PC-3 (cell line): ENCODE measurements at regions of chr11 and their contacts with region 1.

Region 1: GRCh38 chr11:695538-696248 is at the start of gene TMEM80:
- DNase-seq: peak; percentile 98
- ATAC-seq: peak; percentile 78
- H3K4me3 ChIP-seq: peak within 1 kb of the TSS; percentile 86
- H3K27ac ChIP-seq: peak within 1 kb of the TSS; percentile 88
- H3K4me1 ChIP-seq: peaks cover 35% of the 10 kb centered on the region
- H3K27me3 ChIP-seq: no peaks in the 10 kb centered on the region
- CTCF ChIP-seq: no peak
- total RNA-seq, gene TMEM80: 10.8 and 16.2 TPM in 2 replicates

Region 2: DNA sequence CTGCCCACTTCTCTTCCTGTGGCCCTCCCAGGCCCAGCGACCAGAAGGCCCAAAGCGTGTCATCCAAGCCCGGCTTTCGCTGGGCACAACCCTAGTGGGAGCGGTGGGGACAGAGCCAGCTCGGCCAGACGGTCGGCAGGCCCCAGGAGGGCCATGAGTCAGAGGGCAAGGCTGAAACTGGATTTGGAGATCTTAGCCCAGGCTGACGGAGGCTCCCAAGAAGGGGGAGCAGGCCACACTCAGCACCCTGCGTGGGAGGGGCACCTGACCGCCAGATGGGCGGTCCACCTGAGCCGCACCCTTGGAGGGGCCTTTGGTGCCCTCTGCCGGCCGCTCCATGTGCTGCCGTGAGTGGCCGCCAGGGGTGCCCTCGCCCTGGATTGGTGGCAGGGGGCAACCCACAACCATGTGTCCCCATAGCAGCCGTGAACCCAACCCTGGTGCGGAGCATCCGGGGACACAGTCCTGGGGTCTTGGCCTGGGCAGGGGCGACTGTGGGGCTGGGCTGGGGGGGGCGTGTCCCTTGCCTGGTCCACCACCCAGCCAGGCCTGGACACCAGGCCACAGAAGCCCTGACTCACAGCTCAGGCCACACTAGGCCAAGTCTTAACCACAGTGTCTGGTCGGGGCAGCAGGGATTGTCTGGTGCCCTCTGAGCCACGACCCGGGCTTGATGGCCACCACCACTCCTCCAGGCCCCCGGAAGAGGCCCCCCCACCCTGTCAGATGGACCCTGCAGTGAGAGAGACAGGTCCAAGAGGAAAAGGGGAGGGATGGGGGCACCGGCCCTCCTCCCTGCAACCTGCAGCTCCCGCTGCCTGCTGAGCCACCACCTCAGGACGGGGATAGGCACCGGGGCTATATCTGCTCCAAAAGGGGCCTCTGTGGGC is 32.4 kb after region 1 on chr11:
- CTCF ChIA-PET with region 1: interaction called, 11 read pairs
- POLR2A ChIA-PET with region 1: no interaction called
- intact Hi-C with region 1: loop called (anchors 1 kb)
- DNase-seq: peak; percentile 96
- ATAC-seq: peak; percentile 83
- H3K4me3 ChIP-seq: no peak overlapping the region; the same call in 1 of the 2 replicates
- H3K27ac ChIP-seq: peak overlapping the region; percentile 83
- H3K4me1 ChIP-seq: peaks cover 17% of the 10 kb centered on the region
- H3K27me3 ChIP-seq: no peaks in the 10 kb centered on the region
- CTCF ChIP-seq: peak; percentile 98

Region 3: DNA sequence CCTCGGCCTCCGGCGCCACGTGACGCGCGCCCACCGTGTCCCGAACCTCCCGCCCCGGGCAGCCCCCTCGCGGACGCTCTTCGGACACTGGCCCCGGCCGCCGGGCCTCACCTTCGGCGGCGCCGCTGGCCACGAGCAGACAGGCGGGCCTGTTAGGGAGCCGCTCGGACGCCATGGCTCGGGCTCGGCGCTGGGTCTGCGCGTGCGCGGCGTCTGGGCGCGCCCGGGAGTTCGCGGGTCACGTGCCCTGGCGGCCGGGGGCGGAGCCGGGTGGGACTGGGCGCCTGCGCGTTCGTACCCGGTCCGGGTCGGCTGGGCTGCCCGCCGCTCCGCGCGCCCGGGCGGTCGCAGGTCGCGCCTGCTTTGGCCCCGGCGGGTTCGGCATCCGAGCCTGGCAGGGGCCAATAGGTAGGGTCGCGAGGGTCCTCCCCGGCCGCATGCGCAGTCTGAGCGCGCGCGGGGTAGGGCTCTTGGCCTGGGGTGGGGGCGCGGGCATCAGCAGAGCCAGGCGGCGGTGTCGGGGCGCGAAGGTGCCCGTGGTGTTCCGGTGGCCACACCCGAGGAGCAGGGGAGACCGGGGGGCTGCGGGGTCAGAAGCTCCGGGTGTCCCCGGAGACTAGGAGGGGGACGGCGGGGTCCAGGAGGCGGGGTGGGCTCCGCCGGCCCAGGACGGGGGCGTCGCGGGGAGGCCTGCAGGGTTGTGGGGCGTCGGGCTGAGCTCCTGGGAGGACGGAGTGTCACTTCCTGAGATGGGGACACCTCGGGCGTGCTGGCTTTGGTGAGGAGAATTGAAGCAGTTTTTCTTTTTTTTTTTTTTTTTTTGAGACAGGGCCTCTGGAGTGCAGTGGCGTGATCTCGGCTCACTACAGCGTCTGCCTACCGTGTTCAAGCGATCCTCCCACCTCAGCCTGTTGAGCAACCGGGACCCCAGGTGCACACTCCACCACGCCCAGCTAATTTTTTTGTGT is 81.9 kb after region 1 on chr11 and contains the start of gene GATD1:
- CTCF ChIA-PET with region 1: no interaction called
- POLR2A ChIA-PET with region 1: interaction called, 16 read pairs
- intact Hi-C with region 1: no loop called
- DNase-seq: peak; percentile 86
- ATAC-seq: peak; percentile 72
- H3K4me3 ChIP-seq: peak within 1 kb of the TSS; percentile 95
- H3K27ac ChIP-seq: peak within 1 kb of the TSS; percentile 40
- H3K4me1 ChIP-seq: peaks cover 22% of the 10 kb centered on the region
- H3K27me3 ChIP-seq: no peaks in the 10 kb centered on the region
- CTCF ChIP-seq: no peak
- total RNA-seq, gene GATD1: 38.9 and 39.7 TPM in 2 replicates